HCT116 (cell line): ENCODE measurements at regions of chr14 and their contacts with region 1.

Region 1: DNA sequence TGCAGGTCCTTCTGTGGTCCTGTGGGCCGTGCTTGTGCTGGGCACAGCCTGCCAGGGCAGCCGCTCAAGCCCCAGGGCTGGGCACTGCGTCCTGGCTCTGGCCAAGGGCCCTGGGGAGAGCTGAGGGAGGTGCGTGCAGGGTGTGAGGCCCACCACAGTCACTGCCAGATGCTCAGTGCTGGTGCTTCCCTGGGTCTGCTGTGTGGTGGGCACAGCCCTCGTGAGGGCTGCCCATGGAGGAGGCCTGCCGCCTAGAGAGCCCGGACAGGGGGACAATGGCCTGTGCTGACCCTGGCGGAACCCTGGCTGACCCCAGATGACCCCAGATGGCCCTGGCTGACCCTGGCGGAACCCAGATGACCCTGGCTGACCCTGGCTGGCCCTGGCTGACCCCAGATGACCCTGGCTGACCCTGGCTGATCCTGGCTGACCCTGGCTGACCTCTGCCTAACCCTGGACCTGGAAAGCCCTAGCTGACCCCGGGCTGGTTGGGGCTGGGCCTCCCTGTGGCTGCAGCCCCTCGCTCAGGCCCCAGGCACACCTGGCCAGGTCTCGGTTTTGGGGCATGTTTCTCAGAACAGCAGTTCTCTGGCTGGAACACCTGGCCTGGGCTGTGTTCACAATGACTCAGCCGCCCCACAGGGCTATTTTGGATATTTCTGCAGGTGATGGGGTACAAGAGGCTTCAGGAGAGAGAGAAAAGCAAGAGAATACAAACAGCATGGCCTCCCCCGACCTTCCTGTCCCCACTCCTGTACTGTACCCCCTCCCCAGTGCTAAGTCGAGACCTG is 55.4 kb downstream of the TMEM121 start:
- DNase-seq: no peak
- ATAC-seq: 0 out of 2 replicates have a peak, but pooled peaks have one; percentile 17
- H3K4me3 ChIP-seq: no peak overlapping the region
- H3K27ac ChIP-seq: no peak overlapping the region
- H3K4me1 ChIP-seq: no peaks in the 10 kb centered on the region
- H3K27me3 ChIP-seq: no peaks in the 10 kb centered on the region
- CTCF ChIP-seq: no peak
- POLR2A ChIP-seq: no peak
- RAD21 ChIP-seq: no peak

Region 2: GRCh38 chr14:105411017-105411941 is 170.5 kb before region 1 on chr14:
- CTCF ChIA-PET with region 1: no interaction called
- POLR2A ChIA-PET with region 1: no interaction called
- RAD21 ChIA-PET with region 1: no interaction called
- intact Hi-C with region 1: no loop called
- DNase-seq: no peak
- ATAC-seq: peak; percentile 89
- H3K4me3 ChIP-seq: peak overlapping the region; percentile 22 to 44; a peak in 3 of 4 replicates
- H3K27ac ChIP-seq: peak overlapping the region; percentile 53; the same call in 1 of the 2 replicates
- H3K4me1 ChIP-seq: peaks cover 16% of the 10 kb centered on the region in 2 experiments
- H3K27me3 ChIP-seq: no peaks in the 10 kb centered on the region
- CTCF ChIP-seq: no peak
- POLR2A ChIP-seq: no peak
- RAD21 ChIP-seq: no peak

Region 3: DNA sequence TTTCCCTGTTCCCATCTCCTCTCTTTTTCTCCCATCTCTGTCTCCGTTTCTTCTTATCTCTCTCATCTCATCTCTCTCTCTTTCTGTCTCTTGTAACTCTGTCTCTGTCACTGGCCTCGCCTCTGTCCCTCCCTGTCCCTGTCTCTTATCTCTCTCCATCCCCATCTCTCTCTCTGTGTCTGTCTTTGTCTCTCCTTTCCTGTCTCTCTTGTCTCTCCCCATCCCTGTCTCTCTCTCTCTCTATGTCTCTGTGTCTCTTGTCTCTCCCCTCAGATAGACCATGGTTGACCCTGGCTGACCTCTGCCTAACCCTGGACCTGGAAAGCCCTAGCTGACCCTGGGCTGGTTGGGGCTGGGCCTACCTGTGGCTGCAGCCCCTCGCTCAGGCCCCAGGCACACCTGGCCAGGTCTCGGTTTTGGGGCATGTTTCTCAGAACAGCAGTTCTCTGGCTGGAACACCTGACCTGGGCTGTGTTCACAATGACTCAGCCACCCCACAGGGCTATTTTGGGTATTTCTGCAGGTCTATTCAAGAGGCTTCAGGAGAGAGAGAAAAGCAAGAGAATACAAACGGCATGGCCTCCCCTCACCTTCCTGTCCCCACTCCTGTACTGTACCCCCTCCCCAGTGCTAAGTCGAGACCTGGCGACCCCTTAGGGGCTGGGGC is 119.0 kb after region 1 on chr14:
- CTCF ChIA-PET with region 1: no interaction called
- POLR2A ChIA-PET with region 1: no interaction called
- RAD21 ChIA-PET with region 1: no interaction called
- intact Hi-C with region 1: loop called (anchors 5 kb)
- DNase-seq: no peak
- ATAC-seq: no peak
- H3K4me3 ChIP-seq: no peak overlapping the region
- H3K27ac ChIP-seq: no peak overlapping the region
- H3K4me1 ChIP-seq: peaks cover 0 to 7% of the 10 kb centered on the region in 2 experiments; a peak in 2 of 4 replicates
- H3K27me3 ChIP-seq: no peaks in the 10 kb centered on the region
- CTCF ChIP-seq: no peak
- POLR2A ChIP-seq: no peak
- RAD21 ChIP-seq: no peak